Endothelial cell of umbilical vein (primary cell): ENCODE measurements at regions of chr1 and their contacts with region 1.

Region 1: DNA sequence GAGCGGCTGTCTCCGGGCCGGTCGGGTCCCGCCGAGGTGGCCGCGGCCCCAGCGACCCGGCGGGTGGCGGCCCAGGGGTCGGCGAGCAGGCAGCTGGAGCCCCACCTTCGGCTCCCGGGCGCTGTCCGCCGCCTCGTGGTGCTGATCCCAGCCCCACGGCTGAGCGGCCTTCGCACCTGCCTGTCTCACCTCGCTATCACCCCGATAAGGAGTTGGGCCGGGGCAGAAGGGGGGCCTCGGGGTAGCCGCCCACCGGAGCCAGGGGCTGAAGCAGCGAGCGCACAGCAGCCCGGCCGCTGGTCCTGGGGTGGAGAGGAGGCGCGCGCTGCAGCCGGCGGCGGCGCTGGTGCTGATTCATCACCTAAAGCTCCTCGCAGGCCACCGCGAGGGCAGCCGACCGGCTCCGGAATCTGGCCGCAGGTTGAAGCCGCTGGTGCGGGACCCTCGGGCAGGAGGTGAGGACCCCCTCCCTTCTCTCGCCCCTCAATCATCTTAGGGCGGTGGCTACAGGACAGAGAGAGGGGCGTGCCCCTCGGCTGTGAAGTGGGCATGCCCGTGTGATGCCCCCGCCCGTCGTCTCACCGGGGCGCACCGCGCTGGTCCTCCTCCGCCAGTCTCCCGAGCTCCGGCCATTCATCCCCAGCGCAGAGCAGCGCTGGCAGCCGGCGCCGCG is 575 bp downstream of the TRIM67 start:
- DNase-seq: peak; percentile 34
- H3K4me3 ChIP-seq: peak overlapping the region in 1 of 3 experiments; percentile 19
- H3K27ac ChIP-seq: no peak overlapping the region
- H3K4me1 ChIP-seq: no peaks in the 10 kb centered on the region
- H3K27me3 ChIP-seq: peaks cover 57 to 72% of the 10 kb centered on the region in 2 experiments
- CTCF ChIP-seq: no peak
- POLR2A ChIP-seq: no peak

Region 2: DNA sequence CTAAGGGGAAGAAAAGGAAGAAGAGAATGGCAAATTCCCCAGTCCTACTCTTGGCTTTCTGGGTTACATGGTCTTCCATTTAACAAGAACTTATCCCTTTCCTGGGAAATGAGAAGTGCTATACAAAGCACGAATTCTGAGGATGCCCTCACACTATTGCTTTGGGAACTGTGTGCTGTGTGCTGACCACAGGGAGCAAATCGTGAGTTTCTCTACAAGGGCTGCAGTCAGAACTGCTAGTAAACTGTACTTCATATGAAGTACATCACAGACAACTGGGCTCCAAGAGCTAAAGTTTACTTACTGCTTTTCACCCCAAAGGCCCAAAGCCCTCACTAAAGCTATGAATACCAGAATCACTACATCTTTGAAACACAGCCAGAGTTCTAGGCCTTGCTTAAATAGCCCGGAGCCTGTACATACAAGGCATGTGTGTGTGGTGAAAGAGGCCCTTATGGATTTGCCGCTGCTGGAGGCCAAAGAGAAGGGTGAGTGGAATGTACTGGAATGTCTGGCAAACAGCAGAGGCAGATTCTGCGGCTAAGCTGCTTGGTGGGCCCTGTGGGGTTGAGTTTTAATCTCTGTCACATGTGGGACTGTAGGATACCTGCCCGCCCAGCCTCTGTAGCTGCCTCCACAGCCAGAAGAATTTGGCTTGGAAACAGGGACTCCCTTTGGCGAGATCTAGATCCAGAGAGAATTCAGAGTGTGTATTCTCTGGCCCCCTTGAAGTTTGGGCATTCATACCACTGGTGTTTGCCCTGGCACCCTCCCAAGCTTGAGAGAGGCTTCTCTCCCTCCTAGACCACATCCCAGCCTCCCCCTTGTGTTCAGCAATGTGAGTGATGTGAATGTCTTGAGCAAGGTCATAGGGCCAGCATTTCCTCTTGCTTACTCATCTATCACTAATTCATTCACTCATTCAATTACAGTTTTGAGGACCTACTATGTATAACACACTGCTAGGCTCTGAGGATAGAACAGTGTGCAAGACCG is 22.5 kb before region 1 on chr1:
- CTCF ChIA-PET with region 1: no interaction called
- POLR2A ChIA-PET with region 1: no interaction called
- dilution Hi-C with region 1: no loop called
- intact Hi-C with region 1: loop called (anchors 1 kb)
- DNase-seq: no peak
- H3K4me3 ChIP-seq: no peak overlapping the region
- H3K27ac ChIP-seq: peak overlapping the region; percentile 38
- H3K4me1 ChIP-seq: peaks cover 19% of the 10 kb centered on the region
- H3K27me3 ChIP-seq: peaks cover 0 to 5% of the 10 kb centered on the region in 2 experiments
- CTCF ChIP-seq: no peak
- POLR2A ChIP-seq: no peak